Left colon (tissue), 2 donors: ENCODE measurements at regions of chr17 and their contacts with region 1.

Region 1: GRCh38 chr17:45108595-45109521 is 23.5 kb downstream of the PLCD3 start:
- DNase-seq: no peak
- ATAC-seq: peak; percentile 51

Region 2: GRCh38 chr17:44864866-44865660 is 243.8 kb before region 1 on chr17:
- intact Hi-C with region 1: no loop called
- DNase-seq: peak; percentile 49 to 70
- ATAC-seq: peak; percentile 83

Region 3: GRCh38 chr17:44919885-44920564 is 188.8 kb before region 1 on chr17:
- intact Hi-C with region 1: loop called in 1 of 2 experiments (anchors 10 kb)
- DNase-seq: peak; percentile 69 to 78
- ATAC-seq: peak; percentile 97

Region 4: GRCh38 chr17:45021607-45022287 is 87.1 kb before region 1 on chr17:
- intact Hi-C with region 1: loop called in 1 of 2 experiments (anchors 10 kb)
- DNase-seq: peak; percentile 56 to 74
- ATAC-seq: peak; percentile 78